A673 (cell line): ENCODE measurements at regions of chr4 and their contacts with region 1.

Region 1: GRCh38 chr4:150242820-150243458 is 164.7 kb downstream of the DCLK2 start:
- DNase-seq: peak; percentile 57
- H3K4me3 ChIP-seq: no peak overlapping the region
- H3K27ac ChIP-seq: no peak overlapping the region
- H3K4me1 ChIP-seq: peaks cover 12% of the 10 kb centered on the region
- H3K27me3 ChIP-seq: no peaks in the 10 kb centered on the region
- CTCF ChIP-seq: peak; percentile 94

Region 2: DNA sequence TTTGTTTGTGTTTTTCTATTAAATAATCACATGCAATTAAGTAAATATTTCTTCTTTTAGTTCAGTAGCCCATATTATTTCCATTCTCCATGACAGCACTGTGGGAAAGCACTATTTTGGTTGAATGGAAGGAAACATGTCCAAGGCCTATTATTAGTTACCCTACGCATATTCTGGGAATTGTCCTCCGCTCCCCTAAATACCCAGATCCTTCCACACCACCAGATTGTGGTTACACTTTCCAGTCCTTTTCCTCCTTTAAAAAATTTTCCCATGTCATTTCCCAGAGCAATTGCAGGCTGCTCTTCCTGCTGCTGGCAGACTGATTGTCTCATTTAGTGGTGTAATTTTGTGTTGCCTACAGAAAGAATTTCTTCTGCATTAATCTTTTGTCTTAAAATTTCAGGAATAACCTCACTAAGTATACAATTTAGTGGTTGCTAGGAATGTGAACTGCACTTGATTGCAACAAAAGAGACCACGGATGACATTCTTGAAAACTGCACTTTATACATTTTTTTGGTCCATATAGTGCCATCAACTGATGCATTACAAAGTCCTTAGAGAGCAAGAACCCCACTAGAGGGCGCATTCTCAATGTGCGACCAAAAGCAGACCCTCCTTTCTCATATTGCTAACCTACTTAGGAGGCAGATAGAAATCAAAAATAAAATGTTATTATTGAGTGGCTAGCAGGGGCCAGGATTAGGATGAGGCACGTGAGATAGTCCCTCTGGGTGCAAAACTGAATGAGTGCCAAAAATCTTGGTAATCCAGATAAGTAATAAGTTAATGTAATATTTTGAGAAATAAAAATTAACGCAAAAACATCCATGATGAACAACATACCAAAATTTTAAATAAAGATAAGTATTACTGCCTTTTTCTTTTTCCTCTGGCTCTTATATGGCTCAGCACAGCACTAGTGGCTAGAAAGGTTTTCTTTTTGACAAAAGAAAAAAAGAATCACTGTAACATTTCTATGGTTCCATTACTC is 328.5 kb before region 1 on chr4:
- CTCF ChIA-PET with region 1: no interaction called
- POLR2A ChIA-PET with region 1: no interaction called
- intact Hi-C with region 1: loop called (anchors 5 kb)
- DNase-seq: peak; percentile 80
- H3K4me3 ChIP-seq: no peak overlapping the region
- H3K27ac ChIP-seq: no peak overlapping the region
- H3K4me1 ChIP-seq: peaks cover 16% of the 10 kb centered on the region
- H3K27me3 ChIP-seq: no peaks in the 10 kb centered on the region
- CTCF ChIP-seq: peak; percentile 91

Region 3: DNA sequence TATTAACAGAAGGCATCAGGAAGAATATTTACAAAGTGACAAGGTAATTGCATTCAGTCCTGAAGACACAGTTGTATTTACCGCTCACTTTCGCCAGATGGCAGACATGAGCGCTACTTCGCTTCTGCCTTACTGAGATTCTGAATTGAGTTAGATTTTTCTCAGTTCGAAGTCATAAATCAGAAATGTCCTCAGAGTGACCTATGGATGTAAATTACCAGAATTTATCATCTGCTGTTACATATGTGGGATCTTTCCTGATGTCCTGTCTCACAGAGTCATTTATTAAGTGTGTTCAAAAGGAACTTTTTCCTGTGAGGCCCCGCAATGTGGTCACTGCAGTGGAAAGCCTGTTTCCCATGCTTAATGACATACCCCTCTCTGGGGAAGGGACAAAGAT is 262.0 kb before region 1 on chr4:
- CTCF ChIA-PET with region 1: no interaction called
- POLR2A ChIA-PET with region 1: no interaction called
- intact Hi-C with region 1: loop called (anchors 2 kb)
- DNase-seq: peak; percentile 73
- H3K4me3 ChIP-seq: no peak overlapping the region
- H3K27ac ChIP-seq: no peak overlapping the region
- H3K4me1 ChIP-seq: peaks cover 13% of the 10 kb centered on the region
- H3K27me3 ChIP-seq: no peaks in the 10 kb centered on the region
- CTCF ChIP-seq: peak; percentile 85

Region 4: GRCh38 chr4:149999485-150000074 is 243.4 kb before region 1 on chr4:
- CTCF ChIA-PET with region 1: interaction called, 3 read pairs
- POLR2A ChIA-PET with region 1: no interaction called
- intact Hi-C with region 1: loop called (anchors 5 kb)
- DNase-seq: peak; percentile 86
- H3K4me3 ChIP-seq: no peak overlapping the region
- H3K27ac ChIP-seq: no peak overlapping the region
- H3K4me1 ChIP-seq: peaks cover 17% of the 10 kb centered on the region
- H3K27me3 ChIP-seq: no peaks in the 10 kb centered on the region
- CTCF ChIP-seq: peak; percentile 84

Region 5: GRCh38 chr4:150010525-150011126 is 232.3 kb before region 1 on chr4:
- CTCF ChIA-PET with region 1: interaction called, 6 read pairs
- POLR2A ChIA-PET with region 1: no interaction called
- intact Hi-C with region 1: loop called (anchors 2 kb)
- DNase-seq: peak; percentile 76
- H3K4me3 ChIP-seq: no peak overlapping the region
- H3K27ac ChIP-seq: no peak overlapping the region
- H3K4me1 ChIP-seq: peaks cover 12% of the 10 kb centered on the region
- H3K27me3 ChIP-seq: no peaks in the 10 kb centered on the region
- CTCF ChIP-seq: peak; percentile 59